Naive thymus-derived CD4-positive, alpha-beta T cell (primary cell): ENCODE measurements at regions of chr1 and their contacts with region 1.

Region 1: GRCh38 chr1:205791568-205792180 is 16.4 kb upstream of the RAB29 start:
- DNase-seq: peak; percentile 28 to 68 (median 56)
- ATAC-seq: peak; percentile 93
- H3K4me3 ChIP-seq: no peak overlapping the region
- H3K4me3 Mint-ChIP-seq: no peak overlapping the region
- H3K27ac ChIP-seq: no peak overlapping the region
- H3K27ac Mint-ChIP-seq: peak overlapping the region in 1 of 9 donors; percentile 22
- H3K4me1 ChIP-seq: no peaks in the 10 kb centered on the region
- H3K4me1 Mint-ChIP-seq: peaks cover 0 to 5% (median 0%) of the 10 kb centered on the region in 7 donors
- H3K27me3 ChIP-seq: no peaks in the 10 kb centered on the region
- H3K27me3 Mint-ChIP-seq: no peaks in the 10 kb centered on the region

Region 2: GRCh38 chr1:205536759-205537361 is 254.8 kb before region 1 on chr1:
- CTCF ChIA-PET with region 1: no interaction called
- POLR2A ChIA-PET with region 1: no interaction called
- intact Hi-C with region 1: no loop called
- DNase-seq: no peak
- ATAC-seq: no peak
- H3K4me3 ChIP-seq: no peak overlapping the region
- H3K4me3 Mint-ChIP-seq: no peak overlapping the region
- H3K27ac ChIP-seq: no peak overlapping the region
- H3K27ac Mint-ChIP-seq: no peak overlapping the region
- H3K4me1 ChIP-seq: no peaks in the 10 kb centered on the region
- H3K4me1 Mint-ChIP-seq: peaks cover 0 to 12% (median 6%) of the 10 kb centered on the region in 7 donors
- H3K27me3 ChIP-seq: no peaks in the 10 kb centered on the region
- H3K27me3 Mint-ChIP-seq: peaks cover 17 to 24% (median 21%) of the 10 kb centered on the region in 5 donors

Region 3: GRCh38 chr1:205907794-205908193 is 116.1 kb after region 1 on chr1:
- CTCF ChIA-PET with region 1: no interaction called
- POLR2A ChIA-PET with region 1: no interaction called
- intact Hi-C with region 1: loop called in 1 of 2 experiments (anchors 1 kb)
- DNase-seq: no peak
- ATAC-seq: no peak
- H3K4me3 ChIP-seq: no peak overlapping the region
- H3K4me3 Mint-ChIP-seq: no peak overlapping the region
- H3K27ac ChIP-seq: no peak overlapping the region
- H3K27ac Mint-ChIP-seq: no peak overlapping the region
- H3K4me1 ChIP-seq: no peaks in the 10 kb centered on the region
- H3K4me1 Mint-ChIP-seq: no peaks in the 10 kb centered on the region
- H3K27me3 ChIP-seq: no peaks in the 10 kb centered on the region
- H3K27me3 Mint-ChIP-seq: peaks cover 0 to 38% (median 5%) of the 10 kb centered on the region in 5 donors

Region 4: DNA sequence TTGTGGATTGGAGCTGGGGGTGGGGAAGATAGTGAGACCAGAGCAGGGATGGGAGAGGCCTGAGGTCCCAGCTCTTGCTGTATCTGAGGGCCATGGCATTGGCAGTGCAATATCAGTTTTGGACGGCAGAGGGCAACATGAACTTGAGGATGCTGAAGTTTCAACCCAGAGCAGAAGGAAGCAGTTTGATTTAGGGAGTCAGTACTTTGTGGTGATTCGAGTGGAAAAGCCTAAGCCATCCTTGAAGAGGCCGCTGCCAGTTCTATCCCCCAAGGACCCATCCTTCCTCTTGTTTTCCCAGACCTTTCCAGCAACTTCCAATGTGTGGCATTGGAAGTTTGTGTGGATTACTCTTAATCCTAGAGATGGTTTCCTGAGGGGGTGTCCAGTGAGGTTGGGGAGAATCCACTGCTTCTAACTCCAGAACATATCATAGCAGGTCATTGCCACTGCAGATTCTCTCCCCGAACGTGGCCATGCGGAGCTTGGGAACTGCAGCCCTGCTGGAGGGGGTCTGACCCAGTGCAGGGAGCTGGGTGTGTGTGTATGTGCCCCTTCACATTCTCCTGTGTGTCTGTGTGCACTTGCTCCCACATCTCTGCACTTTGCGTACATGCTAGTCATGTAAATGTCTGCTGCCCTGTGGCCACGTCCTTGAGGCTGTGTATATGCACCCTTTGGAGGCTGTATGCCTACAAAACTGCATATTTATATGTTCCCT is 127.5 kb after region 1 on chr1:
- CTCF ChIA-PET with region 1: interaction called, 3 read pairs
- POLR2A ChIA-PET with region 1: no interaction called
- intact Hi-C with region 1: loop called (anchors 1 kb)
- DNase-seq: peak; percentile 11 to 66 (median 47)
- ATAC-seq: peak; percentile 80
- H3K4me3 ChIP-seq: no peak overlapping the region
- H3K4me3 Mint-ChIP-seq: no peak overlapping the region
- H3K27ac ChIP-seq: no peak overlapping the region
- H3K27ac Mint-ChIP-seq: no peak overlapping the region
- H3K4me1 ChIP-seq: no peaks in the 10 kb centered on the region
- H3K4me1 Mint-ChIP-seq: no peaks in the 10 kb centered on the region
- H3K27me3 ChIP-seq: no peaks in the 10 kb centered on the region
- H3K27me3 Mint-ChIP-seq: peaks cover 0 to 3% (median 0%) of the 10 kb centered on the region in 5 donors

Region 5: GRCh38 chr1:205977402-205978014 is 185.8 kb after region 1 on chr1:
- CTCF ChIA-PET with region 1: interaction called, 169 read pairs
- POLR2A ChIA-PET with region 1: interaction called, 6 read pairs
- intact Hi-C with region 1: loop called in 1 of 2 experiments (anchors 1 kb)
- DNase-seq: peak; percentile 45 to 78 (median 68)
- ATAC-seq: peak; percentile 82
- H3K4me3 ChIP-seq: no peak overlapping the region
- H3K4me3 Mint-ChIP-seq: no peak overlapping the region
- H3K27ac ChIP-seq: no peak overlapping the region
- H3K27ac Mint-ChIP-seq: no peak overlapping the region
- H3K4me1 ChIP-seq: no peaks in the 10 kb centered on the region
- H3K4me1 Mint-ChIP-seq: peaks cover 0 to 2% (median 0%) of the 10 kb centered on the region in 7 donors
- H3K27me3 ChIP-seq: no peaks in the 10 kb centered on the region
- H3K27me3 Mint-ChIP-seq: peaks cover 0 to 2% (median 0%) of the 10 kb centered on the region in 5 donors

Region 6: GRCh38 chr1:206030714-206031113 is 239.0 kb after region 1 on chr1:
- CTCF ChIA-PET with region 1: no interaction called
- POLR2A ChIA-PET with region 1: no interaction called
- intact Hi-C with region 1: loop called in 1 of 2 experiments (anchors 1 kb)
- DNase-seq: peak; percentile 33 to 69 (median 58)
- ATAC-seq: peak; percentile 86
- H3K4me3 ChIP-seq: no peak overlapping the region
- H3K4me3 Mint-ChIP-seq: peak overlapping the region in 1 of 10 donors; percentile 6
- H3K27ac ChIP-seq: no peak overlapping the region
- H3K27ac Mint-ChIP-seq: peak overlapping the region in 1 of 9 donors; percentile 58
- H3K4me1 ChIP-seq: peaks cover 0 to 4% of the 10 kb centered on the region in 2 donors
- H3K4me1 Mint-ChIP-seq: peaks cover 0 to 12% (median 11%) of the 10 kb centered on the region in 7 donors
- H3K27me3 ChIP-seq: peaks cover 0 to 2% of the 10 kb centered on the region in 2 donors
- H3K27me3 Mint-ChIP-seq: peaks cover 0 to 72% (median 9%) of the 10 kb centered on the region in 5 donors

Region 7: DNA sequence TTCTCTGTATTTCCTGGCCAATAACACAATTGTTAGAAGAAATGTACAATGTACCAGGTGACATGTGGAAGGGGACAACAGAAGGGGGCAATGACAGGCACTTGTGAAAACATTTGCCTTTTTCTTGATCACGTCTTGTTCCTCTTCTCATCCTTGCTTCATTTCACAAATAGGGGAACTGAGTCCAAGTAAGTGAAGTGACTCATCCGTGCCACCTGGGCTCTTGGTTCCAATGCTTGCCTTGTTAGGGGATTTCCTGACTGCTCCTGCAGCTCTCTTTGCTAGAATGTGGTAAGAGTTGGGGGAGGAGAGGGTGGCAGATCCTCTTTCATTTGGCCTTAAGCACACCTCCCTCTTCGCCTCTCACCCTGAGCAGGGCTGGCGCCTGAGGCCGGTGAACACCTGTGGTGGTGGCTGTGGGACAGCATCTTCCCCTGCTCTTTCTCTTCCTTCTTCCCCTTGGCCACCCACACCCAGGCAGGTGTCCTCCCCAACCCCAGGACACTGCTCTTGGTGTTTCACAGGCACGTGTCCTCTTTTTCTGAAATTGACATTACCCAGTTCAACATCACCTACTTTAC is 259.1 kb after region 1 on chr1:
- CTCF ChIA-PET with region 1: no interaction called
- POLR2A ChIA-PET with region 1: no interaction called
- intact Hi-C with region 1: no loop called
- DNase-seq: peak in 6 of 9 donors; percentile 3 to 54 (median 22)
- ATAC-seq: peak; percentile 94
- H3K4me3 ChIP-seq: no peak overlapping the region
- H3K4me3 Mint-ChIP-seq: peak overlapping the region in 7 of 10 donors; percentile 13 to 63 (median 18)
- H3K27ac ChIP-seq: no peak overlapping the region
- H3K27ac Mint-ChIP-seq: peak overlapping the region in 6 of 9 donors; percentile 11 to 90 (median 53)
- H3K4me1 ChIP-seq: peaks cover 0 to 7% of the 10 kb centered on the region in 2 donors
- H3K4me1 Mint-ChIP-seq: peaks cover 7 to 37% (median 18%) of the 10 kb centered on the region in 7 donors
- H3K27me3 ChIP-seq: no peaks in the 10 kb centered on the region
- H3K27me3 Mint-ChIP-seq: peaks cover 0 to 17% (median 0%) of the 10 kb centered on the region in 5 donors

Region 8: DNA sequence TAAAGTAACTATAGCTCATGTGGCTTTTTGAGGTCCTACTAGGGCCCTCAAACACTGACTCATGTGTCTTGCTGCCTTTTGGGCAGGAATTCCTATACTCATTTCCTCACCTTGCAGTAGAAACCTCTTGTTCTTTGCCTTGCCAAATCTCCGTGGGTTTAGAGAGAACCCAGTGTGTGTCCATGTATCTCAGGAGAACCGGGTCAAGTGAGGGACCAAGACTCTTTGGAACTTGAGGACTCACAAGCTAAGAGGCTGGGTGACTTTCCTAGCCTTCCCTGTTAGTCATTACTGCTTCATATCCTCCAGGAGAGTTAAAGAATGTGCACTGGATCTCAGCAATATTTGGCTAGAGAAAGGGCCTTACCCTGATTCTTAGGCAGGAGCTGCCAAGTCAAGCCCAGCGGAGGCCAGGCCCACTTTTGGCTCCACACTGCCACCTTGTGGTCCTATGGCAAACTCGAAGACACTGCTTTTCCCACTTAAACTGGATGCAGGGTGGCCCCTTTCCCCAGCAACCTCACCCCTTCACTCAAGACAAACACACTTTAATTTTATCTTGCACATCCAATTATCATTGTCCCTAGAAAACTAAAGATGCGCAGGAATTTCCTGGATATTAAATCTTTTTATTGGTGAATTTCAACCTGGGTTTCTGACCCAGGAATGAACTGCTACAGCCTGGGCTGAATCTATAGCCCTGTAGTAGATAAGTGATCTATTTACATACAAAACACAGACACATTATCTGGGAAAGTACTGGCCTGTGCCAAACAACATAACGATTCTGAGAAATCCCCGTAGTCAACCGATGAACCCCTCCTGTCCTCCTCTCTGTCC is 314.9 kb after region 1 on chr1:
- CTCF ChIA-PET with region 1: interaction called, 6 read pairs
- POLR2A ChIA-PET with region 1: no interaction called
- intact Hi-C with region 1: loop called in 1 of 2 experiments (anchors 1 kb)
- DNase-seq: peak; percentile 37 to 77 (median 67)
- ATAC-seq: peak; percentile 90
- H3K4me3 ChIP-seq: no peak overlapping the region
- H3K4me3 Mint-ChIP-seq: no peak overlapping the region
- H3K27ac ChIP-seq: no peak overlapping the region
- H3K27ac Mint-ChIP-seq: no peak overlapping the region
- H3K4me1 ChIP-seq: no peaks in the 10 kb centered on the region
- H3K4me1 Mint-ChIP-seq: peaks cover 0 to 6% (median 0%) of the 10 kb centered on the region in 7 donors
- H3K27me3 ChIP-seq: no peaks in the 10 kb centered on the region
- H3K27me3 Mint-ChIP-seq: peaks cover 0 to 33% (median 3%) of the 10 kb centered on the region in 5 donors